Activated naive CD4-positive, alpha-beta T cell treated with anti-CD3 and anti-CD28 coated beads, Interleukin-2, amount 10 ng/mL, durations not matched to agents 7 days and 5 days (primary cell): ENCODE measurements at regions of chr13 and their contacts with region 1.

Region 1: DNA sequence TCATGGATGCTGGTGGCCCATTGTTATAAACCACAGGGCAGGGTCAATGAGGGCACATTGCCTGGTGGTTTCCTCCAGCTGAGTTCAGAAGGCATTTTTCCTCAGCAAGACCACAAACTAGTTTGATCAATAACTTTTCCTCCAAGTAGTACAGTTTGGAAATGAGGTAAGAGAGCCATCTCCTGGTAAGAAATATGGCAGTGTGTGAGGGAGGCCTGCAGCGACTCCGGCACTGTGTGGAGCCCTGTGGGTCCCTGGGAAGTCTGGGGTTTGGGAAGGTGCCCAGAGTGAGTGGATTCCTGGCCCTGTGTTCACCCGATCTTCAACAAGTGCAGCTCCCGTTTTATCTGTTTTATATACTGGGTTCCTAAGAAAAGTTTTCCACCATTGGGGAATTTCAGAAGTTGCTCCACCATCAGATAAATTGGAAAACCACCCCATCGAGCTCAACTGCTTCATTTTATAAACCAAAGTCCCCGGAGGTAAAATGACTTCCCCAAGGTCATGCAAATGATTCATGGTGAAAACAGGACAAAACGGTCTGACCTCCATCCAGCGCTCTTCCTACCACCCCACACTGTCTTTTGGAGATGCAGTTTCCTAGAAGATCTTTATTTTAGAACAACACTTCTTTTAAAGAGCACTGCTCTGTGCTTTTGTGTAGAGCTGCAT is 148.4 kb downstream of the KATNAL1 start:
- DNase-seq: peak; percentile 36
- H3K4me3 Mint-ChIP-seq: no peak overlapping the region
- H3K27ac Mint-ChIP-seq: no peak overlapping the region
- H3K4me1 Mint-ChIP-seq: peaks cover 43% of the 10 kb centered on the region
- H3K27me3 Mint-ChIP-seq: peaks cover 5% of the 10 kb centered on the region

Region 2: DNA sequence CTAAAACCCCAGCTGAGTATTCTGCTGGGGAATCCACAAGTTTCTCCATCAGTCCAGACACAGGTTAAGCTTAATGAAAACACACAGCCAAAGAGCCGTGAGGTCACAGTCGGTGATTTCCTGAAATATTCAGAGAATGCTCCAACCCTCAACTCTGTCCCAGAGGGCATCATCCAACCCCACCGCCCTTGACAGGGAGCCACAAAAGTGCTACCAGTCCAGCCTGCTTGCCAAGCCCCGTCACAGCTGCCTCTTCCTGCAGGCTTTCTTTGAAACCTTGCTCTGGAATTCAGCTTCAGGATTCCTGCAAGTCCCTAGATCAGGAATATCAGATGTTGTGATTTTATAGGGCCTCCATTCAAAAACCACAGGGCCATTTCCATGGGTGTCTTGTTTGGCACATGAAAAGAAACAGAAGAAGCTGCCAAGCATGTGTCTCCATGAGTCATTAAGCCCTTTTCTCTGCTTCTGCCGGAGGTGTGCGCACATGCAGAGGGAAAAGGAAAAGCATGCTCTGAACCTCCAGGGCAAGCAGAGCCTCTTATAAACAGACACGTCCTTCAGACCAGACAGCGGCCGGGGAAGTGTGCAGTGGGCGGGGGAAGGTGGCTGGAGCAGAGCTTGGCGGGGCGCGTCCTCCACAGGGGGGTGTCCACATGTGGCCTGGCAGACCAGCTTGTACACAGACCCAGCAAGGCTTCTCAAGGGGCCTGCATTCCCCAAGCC is 16.3 kb before region 1 on chr13:
- CTCF ChIA-PET with region 1: interaction called, 15 read pairs
- DNase-seq: peak; percentile 34
- H3K4me3 Mint-ChIP-seq: no peak overlapping the region
- H3K27ac Mint-ChIP-seq: peak overlapping the region; percentile 81
- H3K4me1 Mint-ChIP-seq: peaks cover 60% of the 10 kb centered on the region
- H3K27me3 Mint-ChIP-seq: peaks cover 30% of the 10 kb centered on the region

Region 3: GRCh38 chr13:30148171-30148754 is 10.6 kb before region 1 on chr13:
- CTCF ChIA-PET with region 1: interaction called, 15 read pairs
- DNase-seq: peak; percentile 72
- H3K4me3 Mint-ChIP-seq: peak overlapping the region; percentile 34
- H3K27ac Mint-ChIP-seq: peak overlapping the region; percentile 99
- H3K4me1 Mint-ChIP-seq: peaks cover 94% of the 10 kb centered on the region
- H3K27me3 Mint-ChIP-seq: no peaks in the 10 kb centered on the region